Breast epithelium (tissue), 4 donors: ENCODE measurements at regions of chr13 and their contacts with region 1.

Region 1: GRCh38 chr13:110555601-110556223 is 5.8 kb downstream of the RAB20 start:
- DNase-seq: peak in 1 of 2 donors; percentile 54
- H3K4me3 ChIP-seq: no peak overlapping the region
- H3K27ac ChIP-seq: peak overlapping the region; percentile 77 to 83
- H3K4me1 ChIP-seq: no peaks in the 10 kb centered on the region
- H3K27me3 ChIP-seq: no peaks in the 10 kb centered on the region
- CTCF ChIP-seq: no peak
- POLR2A ChIP-seq: no peak

Region 2: GRCh38 chr13:109955598-109955997 is 600.1 kb before region 1 on chr13:
- intact Hi-C with region 1: no loop called
- DNase-seq: no peak
- H3K4me3 ChIP-seq: no peak overlapping the region
- H3K27ac ChIP-seq: no peak overlapping the region
- H3K4me1 ChIP-seq: no peaks in the 10 kb centered on the region
- H3K27me3 ChIP-seq: no peaks in the 10 kb centered on the region
- CTCF ChIP-seq: no peak
- POLR2A ChIP-seq: no peak

Region 3: GRCh38 chr13:110525328-110526319 is 30.1 kb before region 1 on chr13:
- intact Hi-C with region 1: no loop called
- DNase-seq: no peak
- H3K4me3 ChIP-seq: no peak overlapping the region
- H3K27ac ChIP-seq: peak overlapping the region in 1 of 2 donors; percentile 82
- H3K4me1 ChIP-seq: peaks cover 4 to 12% of the 10 kb centered on the region in 2 donors
- H3K27me3 ChIP-seq: no peaks in the 10 kb centered on the region
- CTCF ChIP-seq: no peak
- POLR2A ChIP-seq: no peak

Region 4: DNA sequence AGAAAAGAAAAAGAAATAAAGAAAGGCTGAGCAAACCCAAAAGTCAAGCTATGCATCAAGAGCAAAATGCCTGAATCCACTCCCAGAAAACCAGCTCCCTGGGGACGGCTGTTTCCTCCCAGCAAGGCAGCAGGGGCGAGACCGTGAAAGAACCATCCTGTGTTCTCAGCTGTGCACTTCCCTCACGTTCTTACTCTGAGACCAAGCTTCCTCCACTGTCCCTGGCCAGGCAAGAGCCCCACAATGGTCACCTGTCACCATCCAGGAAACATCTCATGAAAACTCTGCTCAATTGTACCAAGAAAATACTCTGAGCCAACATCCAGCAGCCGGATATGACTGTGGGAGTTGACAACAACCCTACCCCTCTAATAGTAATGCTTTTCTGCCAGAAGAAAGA is 17.1 kb before region 1 on chr13:
- intact Hi-C with region 1: loop called (anchors 2 kb)
- DNase-seq: no peak
- H3K4me3 ChIP-seq: no peak overlapping the region
- H3K27ac ChIP-seq: no peak overlapping the region
- H3K4me1 ChIP-seq: no peaks in the 10 kb centered on the region
- H3K27me3 ChIP-seq: no peaks in the 10 kb centered on the region
- CTCF ChIP-seq: no peak
- POLR2A ChIP-seq: no peak

Region 5: GRCh38 chr13:110628477-110628793 is 72.7 kb after region 1 on chr13:
- intact Hi-C with region 1: loop called (anchors 2 kb)
- DNase-seq: no peak
- H3K4me3 ChIP-seq: peak overlapping the region in 1 of 3 donors; percentile 10
- H3K27ac ChIP-seq: peak overlapping the region in 1 of 2 donors; percentile 20
- H3K4me1 ChIP-seq: no peaks in the 10 kb centered on the region
- H3K27me3 ChIP-seq: no peaks in the 10 kb centered on the region
- CTCF ChIP-seq: no peak
- POLR2A ChIP-seq: no peak

Region 6: GRCh38 chr13:110957181-110957884 is 401.6 kb after region 1 on chr13:
- intact Hi-C with region 1: no loop called
- DNase-seq: no peak
- H3K4me3 ChIP-seq: no peak overlapping the region
- H3K27ac ChIP-seq: no peak overlapping the region
- H3K4me1 ChIP-seq: no peaks in the 10 kb centered on the region
- H3K27me3 ChIP-seq: no peaks in the 10 kb centered on the region
- CTCF ChIP-seq: no peak
- POLR2A ChIP-seq: no peak